ENCODE measurements at regions of chr14 and their contacts with region 1.

Region 1: GRCh38 chr14:63641473-63642228 is at the start of gene WDR89:
- DNase-seq: peak; percentile 98
- H3K4me3 Mint-ChIP-seq: peak within 1 kb of the TSS; percentile 86
- H3K27ac Mint-ChIP-seq: peak within 1 kb of the TSS; percentile 93
- H3K4me1 Mint-ChIP-seq: peaks cover 24% of the 10 kb centered on the region
- H3K27me3 Mint-ChIP-seq: no peaks in the 10 kb centered on the region
- total RNA-seq, gene WDR89: 32.6 and 33.1 TPM in 2 replicates

Region 2: DNA sequence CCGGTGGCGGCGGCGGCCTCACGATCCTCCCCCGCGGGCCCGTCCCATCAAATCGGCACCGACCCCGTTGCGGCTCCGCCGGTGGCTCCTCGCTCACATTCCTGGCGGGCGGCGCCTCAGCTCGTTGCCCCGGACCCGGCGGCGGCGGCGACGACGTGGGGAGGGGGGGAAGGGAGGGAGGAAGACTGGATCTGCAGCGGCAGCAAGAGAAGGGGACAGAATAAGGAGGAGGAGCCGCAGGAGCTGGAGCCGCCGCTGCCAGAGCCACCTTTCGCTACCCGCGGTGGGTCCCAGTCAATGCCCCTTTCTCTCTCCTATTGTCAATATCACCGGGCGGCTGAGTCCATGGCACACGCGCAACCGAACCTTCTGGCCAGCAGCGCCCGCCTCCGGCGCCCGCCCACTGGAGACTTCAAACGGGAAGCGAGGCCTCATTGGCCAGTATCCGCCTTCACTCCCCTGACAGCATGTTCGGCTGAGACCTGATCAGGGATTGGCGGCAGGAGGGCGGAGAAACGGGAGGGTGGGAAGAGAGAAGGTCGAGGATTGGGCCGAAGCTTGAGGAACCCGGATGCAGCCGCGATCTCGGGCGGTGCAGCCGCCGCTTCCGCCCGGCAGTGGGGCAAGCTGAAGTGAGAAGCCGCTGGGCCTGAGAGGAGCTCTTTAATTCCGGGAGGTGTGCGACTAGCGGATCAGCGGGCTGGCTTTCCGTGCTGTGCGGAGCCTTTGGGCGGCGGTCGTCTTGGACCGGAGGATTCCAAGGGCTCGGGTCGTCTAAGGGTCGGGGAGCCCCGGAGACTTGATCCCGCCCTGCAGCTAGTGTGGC is 98.4 kb before region 1 on chr14 and contains the start of gene PPP2R5E:
- intact Hi-C with region 1: loop called (anchors 1 kb)
- DNase-seq: peak; percentile 99
- H3K4me3 Mint-ChIP-seq: peak within 1 kb of the TSS; percentile 88
- H3K27ac Mint-ChIP-seq: peak within 1 kb of the TSS; percentile 92
- H3K4me1 Mint-ChIP-seq: peaks cover 21% of the 10 kb centered on the region
- H3K27me3 Mint-ChIP-seq: peaks cover 1% of the 10 kb centered on the region
- total RNA-seq, gene PPP2R5E: 45.1 and 45.7 TPM in 2 replicates

Region 3: DNA sequence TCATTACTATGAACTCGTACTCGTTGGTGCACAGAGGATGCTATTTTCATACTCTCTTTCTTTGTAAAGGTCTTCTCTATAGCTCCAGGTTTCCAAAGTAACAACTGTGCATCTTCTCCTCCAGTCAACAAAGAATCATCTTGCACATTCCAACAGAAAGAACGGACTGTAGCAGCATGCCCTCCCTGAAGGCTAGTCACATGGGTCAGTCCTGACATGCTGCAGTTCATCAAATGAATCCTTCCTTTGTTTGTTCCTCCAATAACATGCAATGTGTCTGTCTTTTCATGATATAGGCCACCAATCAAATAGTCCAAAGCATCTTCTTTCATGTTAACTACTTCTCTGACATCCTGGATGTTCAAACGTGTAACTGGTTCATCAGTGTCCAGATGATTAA is 42.8 kb before region 1 on chr14:
- intact Hi-C with region 1: no loop called
- DNase-seq: no peak
- H3K4me3 Mint-ChIP-seq: no peak overlapping the region
- H3K27ac Mint-ChIP-seq: no peak overlapping the region
- H3K4me1 Mint-ChIP-seq: no peaks in the 10 kb centered on the region
- H3K27me3 Mint-ChIP-seq: no peaks in the 10 kb centered on the region

Region 4: DNA sequence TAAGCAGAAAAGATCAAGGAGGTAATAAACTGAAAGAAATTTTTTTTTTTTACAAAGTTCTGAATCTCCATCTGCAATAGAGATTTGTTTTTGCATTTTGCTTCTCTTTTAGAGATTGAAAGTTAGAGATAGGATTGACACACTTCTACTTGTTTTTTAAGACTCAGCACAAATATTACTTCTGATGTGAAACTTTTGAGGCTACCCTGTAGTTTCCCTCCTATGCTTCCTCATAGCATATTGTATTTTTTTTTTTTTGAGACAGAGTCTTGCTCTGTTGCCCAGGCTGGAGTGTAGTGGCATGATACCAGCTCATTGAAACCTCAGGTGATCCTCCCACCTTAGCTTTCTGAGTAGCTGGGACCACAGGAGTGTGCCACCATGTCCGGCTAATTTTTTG is 118.4 kb after region 1 on chr14:
- intact Hi-C with region 1: loop called (anchors 5 kb)
- DNase-seq: no peak
- H3K4me3 Mint-ChIP-seq: peak overlapping the region; percentile 81
- H3K27ac Mint-ChIP-seq: peak overlapping the region; percentile 93
- H3K4me1 Mint-ChIP-seq: peaks cover 11% of the 10 kb centered on the region
- H3K27me3 Mint-ChIP-seq: no peaks in the 10 kb centered on the region

Region 5: DNA sequence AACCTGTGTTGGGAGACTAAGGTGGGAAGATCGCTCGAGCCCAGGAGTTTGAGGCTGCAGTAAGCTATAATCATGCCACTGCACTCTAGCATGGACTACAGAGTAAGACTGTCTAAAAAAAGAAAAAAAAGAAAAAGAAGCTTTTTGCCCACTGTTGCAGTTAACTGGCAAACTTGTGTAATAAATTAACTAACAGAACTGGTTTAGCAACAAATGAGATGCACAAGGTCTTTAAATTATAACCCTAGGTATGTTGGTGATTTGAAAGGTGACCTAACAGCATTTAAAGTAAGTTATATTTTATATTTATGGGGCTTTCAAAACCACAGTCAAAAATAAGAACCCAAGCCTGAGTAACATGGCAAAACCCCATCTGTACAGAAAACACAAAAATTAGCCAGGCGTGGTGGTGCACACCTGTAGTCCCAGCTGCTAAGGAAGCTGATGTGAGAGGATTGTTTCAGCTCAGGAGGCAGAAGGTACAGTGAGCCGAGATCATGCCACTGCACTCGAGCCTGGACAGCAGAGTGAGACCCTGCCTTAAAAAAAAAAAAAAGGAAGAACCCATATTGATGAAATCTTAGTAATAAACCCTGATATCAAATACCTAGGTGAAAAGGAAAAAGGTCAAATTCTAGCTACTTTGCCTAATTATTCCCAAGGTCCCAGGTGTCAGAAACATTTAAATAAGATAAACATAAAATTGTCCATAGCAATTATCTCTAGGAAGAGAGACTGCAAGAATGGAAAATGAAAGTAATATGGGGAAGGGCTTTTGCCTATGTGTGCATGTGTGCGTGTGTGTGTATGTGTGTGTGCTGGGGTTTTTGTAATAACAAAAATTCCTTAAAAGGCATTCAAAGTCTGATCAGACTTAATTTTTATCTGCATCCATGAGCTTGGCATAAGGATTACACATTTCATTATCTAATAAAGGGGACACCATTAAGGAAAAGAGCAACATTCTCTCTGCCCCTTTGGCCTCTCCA is 226.6 kb after region 1 on chr14:
- intact Hi-C with region 1: no loop called
- DNase-seq: peak; percentile 81
- H3K4me3 Mint-ChIP-seq: peak overlapping the region; percentile 45
- H3K27ac Mint-ChIP-seq: peak overlapping the region; percentile 15
- H3K4me1 Mint-ChIP-seq: peaks cover 42% of the 10 kb centered on the region
- H3K27me3 Mint-ChIP-seq: no peaks in the 10 kb centered on the region

Region 6: DNA sequence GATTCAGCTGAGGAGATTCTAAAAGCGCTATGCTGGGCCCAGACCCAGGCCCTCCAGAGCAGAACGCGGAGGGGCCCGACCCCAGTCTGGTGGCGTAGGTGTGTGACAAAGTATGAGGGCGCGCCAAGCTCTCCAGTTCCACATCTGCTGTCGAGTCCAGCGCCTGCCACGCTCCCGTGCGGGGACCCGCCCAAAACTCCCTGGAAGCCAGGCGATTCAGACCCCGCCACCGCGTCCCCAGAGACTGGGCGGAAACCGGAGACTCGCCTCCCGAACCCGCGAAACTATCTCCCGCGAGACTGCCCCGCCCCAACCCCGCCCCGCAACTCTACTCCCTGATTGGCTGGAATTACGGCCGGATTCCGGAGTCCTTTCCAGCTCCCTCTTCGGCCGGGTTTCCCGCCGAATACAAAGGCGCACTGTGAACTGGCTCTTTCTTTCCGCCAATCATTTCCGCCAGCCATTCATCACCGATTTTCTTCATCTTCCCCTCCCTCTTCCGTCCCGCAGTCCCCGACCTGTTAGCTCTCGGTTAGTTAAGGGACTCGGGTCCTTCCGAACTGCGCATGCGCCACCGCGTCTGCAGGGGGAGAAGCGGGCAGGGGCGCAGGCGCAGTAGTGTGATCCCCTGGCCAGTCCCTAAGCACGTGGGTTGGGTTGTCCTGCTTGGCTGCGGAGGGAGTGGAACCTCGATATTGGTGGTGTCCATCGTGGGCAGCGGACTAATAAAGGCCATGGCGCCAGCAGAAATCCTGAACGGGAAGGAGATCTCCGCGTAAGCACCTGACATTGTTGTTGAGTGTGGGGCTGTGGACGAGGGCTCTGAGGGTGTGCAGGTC is 746.3 kb after region 1 on chr14 and contains the start of gene MTHFD1:
- intact Hi-C with region 1: loop called (anchors 5 kb)
- DNase-seq: peak; percentile 99
- H3K4me3 Mint-ChIP-seq: peak within 1 kb of the TSS; percentile 99
- H3K27ac Mint-ChIP-seq: peak within 1 kb of the TSS; percentile 94
- H3K4me1 Mint-ChIP-seq: peaks cover 40% of the 10 kb centered on the region
- H3K27me3 Mint-ChIP-seq: peaks cover 2% of the 10 kb centered on the region
- total RNA-seq, gene MTHFD1: 246 and 249 TPM in 2 replicates